CD4-positive, alpha-beta memory T cell (primary cell): ENCODE measurements at regions of chr21 and their contacts with region 1.

Region 1: GRCh38 chr21:25586326-25586725 is 21.0 kb downstream of the MRPL39 start:
- DNase-seq: no peak
- H3K4me3 ChIP-seq: no peak overlapping the region
- H3K4me3 Mint-ChIP-seq: no peak overlapping the region
- H3K27ac ChIP-seq: no peak overlapping the region
- H3K27ac Mint-ChIP-seq: peak overlapping the region; percentile 4 to 71 (median 37)
- H3K4me1 ChIP-seq: peaks cover 9% of the 10 kb centered on the region
- H3K4me1 Mint-ChIP-seq: peaks cover 18 to 47% (median 34%) of the 10 kb centered on the region in 4 donors
- H3K27me3 ChIP-seq: no peaks in the 10 kb centered on the region
- H3K27me3 Mint-ChIP-seq: no peaks in the 10 kb centered on the region

Region 2: GRCh38 chr21:25518491-25518911 is 67.8 kb before region 1 on chr21:
- CTCF ChIA-PET with region 1: no interaction called
- POLR2A ChIA-PET with region 1: no interaction called
- intact Hi-C with region 1: no loop called
- DNase-seq: peak in 1 of 5 donors; percentile 13
- H3K4me3 ChIP-seq: no peak overlapping the region
- H3K4me3 Mint-ChIP-seq: no peak overlapping the region
- H3K27ac ChIP-seq: no peak overlapping the region
- H3K27ac Mint-ChIP-seq: no peak overlapping the region
- H3K4me1 ChIP-seq: no peaks in the 10 kb centered on the region
- H3K4me1 Mint-ChIP-seq: no peaks in the 10 kb centered on the region
- H3K27me3 ChIP-seq: no peaks in the 10 kb centered on the region
- H3K27me3 Mint-ChIP-seq: no peaks in the 10 kb centered on the region

Region 3: DNA sequence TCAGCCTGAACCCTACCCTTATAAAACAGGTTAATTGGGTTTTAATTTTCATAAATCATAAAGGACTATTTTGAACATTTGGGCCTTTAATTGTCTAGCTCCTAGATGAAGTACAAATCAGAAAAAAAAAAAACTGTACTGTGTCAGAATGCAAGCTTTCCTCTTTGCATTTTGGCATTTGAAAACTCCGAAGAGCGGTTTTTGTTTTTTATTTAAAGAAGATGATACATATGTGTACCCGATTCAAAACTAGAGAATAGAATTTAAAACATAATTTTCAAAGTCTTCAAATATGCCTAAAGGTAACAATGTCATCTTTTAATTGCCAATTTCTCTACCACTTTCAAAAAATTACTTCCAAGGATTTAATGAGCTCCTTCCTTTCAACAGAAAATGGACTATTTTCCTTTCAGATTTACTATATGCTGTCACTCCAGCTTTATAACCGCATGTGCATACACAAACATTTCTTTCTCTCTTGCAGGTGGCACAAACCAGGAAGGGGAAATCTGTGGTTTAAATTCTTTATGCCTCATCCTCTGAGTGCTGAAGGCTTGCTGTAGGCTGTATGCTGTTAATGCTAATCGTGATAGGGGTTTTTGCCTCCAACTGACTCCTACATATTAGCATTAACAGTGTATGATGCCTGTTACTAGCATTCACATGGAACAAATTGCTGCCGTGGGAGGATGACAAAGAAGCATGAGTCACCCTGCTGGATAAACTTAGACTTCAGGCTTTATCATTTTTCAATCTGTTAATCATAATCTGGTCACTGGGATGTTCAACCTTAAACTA is 12.7 kb before region 1 on chr21:
- CTCF ChIA-PET with region 1: interaction called, 9 read pairs
- POLR2A ChIA-PET with region 1: interaction called, 4 read pairs
- intact Hi-C with region 1: loop called (anchors 2 kb)
- DNase-seq: peak; percentile 60 to 84 (median 67)
- H3K4me3 ChIP-seq: peak overlapping the region in 1 of 2 donors; percentile 38
- H3K4me3 Mint-ChIP-seq: peak overlapping the region; percentile 75 to 89 (median 86)
- H3K27ac ChIP-seq: peak overlapping the region; percentile 74
- H3K27ac Mint-ChIP-seq: peak overlapping the region; percentile 87 to 97 (median 92)
- H3K4me1 ChIP-seq: peaks cover 75% of the 10 kb centered on the region
- H3K4me1 Mint-ChIP-seq: peaks cover 47 to 76% (median 64%) of the 10 kb centered on the region in 4 donors
- H3K27me3 ChIP-seq: no peaks in the 10 kb centered on the region
- H3K27me3 Mint-ChIP-seq: no peaks in the 10 kb centered on the region